ENCODE measurements at regions of chr22 and their contacts with region 1.

Region 1: GRCh38 chr22:22687638-22688500 is 43.5 kb downstream of the GGTLC2 start:
- DNase-seq: no peak
- H3K4me3 ChIP-seq: no peak overlapping the region
- H3K27ac ChIP-seq: no peak overlapping the region
- H3K4me1 ChIP-seq: peaks cover 0 to 21% (median 18%) of the 10 kb centered on the region in 4 donors
- H3K27me3 ChIP-seq: no peaks in the 10 kb centered on the region
- CTCF ChIP-seq: peak in 3 of 4 experiments; percentile 22 to 63 (median 63)
- EP300 ChIP-seq: no peak
- POLR2A ChIP-seq: no peak

Region 2: GRCh38 chr22:22587577-22588188 is 100.2 kb before region 1 on chr22:
- intact Hi-C with region 1: loop called (anchors 5 kb)
- DNase-seq: no peak
- H3K4me3 ChIP-seq: no peak overlapping the region
- H3K27ac ChIP-seq: no peak overlapping the region
- H3K4me1 ChIP-seq: no peaks in the 10 kb centered on the region
- H3K27me3 ChIP-seq: peaks cover 0 to 4% (median 0%) of the 10 kb centered on the region in 3 donors
- CTCF ChIP-seq: no peak
- EP300 ChIP-seq: no peak
- POLR2A ChIP-seq: no peak

Region 3: GRCh38 chr22:22884010-22884887 is 196.4 kb after region 1 on chr22:
- intact Hi-C with region 1: no loop called
- DNase-seq: no peak
- H3K4me3 ChIP-seq: no peak overlapping the region
- H3K27ac ChIP-seq: no peak overlapping the region
- H3K4me1 ChIP-seq: no peaks in the 10 kb centered on the region
- H3K27me3 ChIP-seq: peaks cover 0 to 7% (median 0%) of the 10 kb centered on the region in 3 donors
- CTCF ChIP-seq: peak in 3 of 4 experiments; percentile 26 to 29 (median 29)
- EP300 ChIP-seq: no peak
- POLR2A ChIP-seq: no peak